WTC11 (cell line): ENCODE measurements at regions of chr12 and their contacts with region 1.

Region 1: DNA sequence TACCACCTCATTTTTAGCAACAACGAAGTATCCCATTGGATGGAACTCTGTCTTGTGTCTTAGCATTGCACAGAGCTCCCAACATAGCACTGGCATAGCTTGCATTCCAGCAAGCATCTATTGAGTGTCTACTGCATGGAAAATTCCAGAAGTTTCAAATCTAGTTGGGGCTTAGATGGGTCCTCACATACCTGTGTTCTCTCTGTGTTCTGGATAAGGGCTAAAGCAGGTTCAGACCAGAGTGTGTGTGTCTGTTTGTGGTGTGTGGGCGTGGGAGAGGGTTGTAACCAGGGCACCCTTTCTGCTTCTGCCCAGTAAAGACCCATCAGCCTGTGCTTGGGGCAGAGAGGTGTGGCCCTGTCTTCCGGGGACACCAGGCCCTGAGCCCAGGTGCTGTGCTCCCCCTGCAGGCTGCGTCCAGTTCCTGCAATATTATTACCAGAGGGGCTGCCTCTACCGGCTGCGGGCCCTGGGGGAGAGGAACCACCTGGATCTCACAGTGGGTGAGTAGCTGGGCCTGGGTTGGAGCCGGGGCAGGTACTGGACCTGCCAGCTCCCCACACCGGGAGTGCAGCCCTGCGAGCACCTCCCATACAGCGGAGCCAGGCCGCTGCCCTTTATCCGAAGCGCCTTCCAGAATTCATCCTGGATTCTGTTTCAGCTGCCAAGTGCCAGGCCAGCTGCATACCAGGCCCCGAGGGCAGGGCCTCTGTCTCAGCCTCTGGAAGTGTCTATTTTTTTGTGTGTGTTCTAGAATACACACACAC is 20.3 kb downstream of the RHOF start:
- DNase-seq: peak; percentile 88
- ATAC-seq: peak; percentile 77
- H3K4me3 Mint-ChIP-seq: no peak overlapping the region
- H3K27ac Mint-ChIP-seq: peak overlapping the region; percentile 72
- H3K4me1 Mint-ChIP-seq: peaks cover 16% of the 10 kb centered on the region
- H3K27me3 Mint-ChIP-seq: no peaks in the 10 kb centered on the region
- CTCF ChIP-seq: peak; percentile 77

Region 2: DNA sequence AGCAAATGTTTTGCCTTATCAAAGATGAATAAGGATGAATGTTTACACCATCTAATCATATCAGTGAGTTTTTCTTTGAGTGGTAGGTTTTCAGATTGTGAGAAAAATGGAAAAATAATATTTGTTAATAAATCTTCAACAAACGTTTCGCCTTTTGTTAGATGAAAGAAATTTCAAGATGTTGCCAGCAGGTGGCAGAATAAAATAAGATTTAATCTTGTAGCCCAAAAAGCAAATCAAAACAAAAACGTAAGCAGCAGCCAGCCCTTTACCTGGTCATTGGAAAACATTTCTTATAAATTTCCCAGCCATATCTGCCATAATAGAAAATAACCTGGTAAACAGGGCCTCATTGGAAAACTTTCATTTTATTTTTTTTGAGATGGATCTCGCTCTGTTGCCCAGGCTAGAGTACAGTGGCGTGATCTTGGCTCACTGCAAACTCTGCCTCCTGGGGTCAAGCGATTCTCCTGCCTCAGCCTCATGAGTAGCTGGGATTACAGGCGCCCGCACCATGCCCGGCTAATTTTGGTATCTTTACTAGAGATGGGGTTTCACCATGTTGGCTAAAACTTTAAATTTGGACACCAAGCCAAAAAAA is 76.0 kb before region 1 on chr12:
- CTCF ChIA-PET with region 1: interaction called, 19 read pairs
- POLR2A ChIA-PET with region 1: no interaction called
- DNase-seq: no peak
- ATAC-seq: no peak
- H3K4me3 Mint-ChIP-seq: no peak overlapping the region
- H3K27ac Mint-ChIP-seq: no peak overlapping the region
- H3K4me1 Mint-ChIP-seq: no peaks in the 10 kb centered on the region
- H3K27me3 Mint-ChIP-seq: no peaks in the 10 kb centered on the region
- CTCF ChIP-seq: peak; percentile 25; the same call in 1 of the 2 replicates

Region 3: GRCh38 chr12:121712461-121713256 is 60.5 kb before region 1 on chr12 and contains the start of gene TMEM120B:
- CTCF ChIA-PET with region 1: interaction called, 27 read pairs
- POLR2A ChIA-PET with region 1: no interaction called
- DNase-seq: peak; percentile 71
- ATAC-seq: peak; percentile 85
- H3K4me3 Mint-ChIP-seq: peak within 1 kb of the TSS; percentile 90
- H3K27ac Mint-ChIP-seq: peak within 1 kb of the TSS; percentile 96
- H3K4me1 Mint-ChIP-seq: peaks cover 36% of the 10 kb centered on the region
- H3K27me3 Mint-ChIP-seq: no peaks in the 10 kb centered on the region
- CTCF ChIP-seq: no peak
- total RNA-seq, gene TMEM120B: 30.7 to 36.9 TPM (median 33.6 TPM) in 3 replicates

Region 4: GRCh38 chr12:121817648-121818043 is 44.5 kb after region 1 on chr12:
- CTCF ChIA-PET with region 1: no interaction called
- POLR2A ChIA-PET with region 1: no interaction called
- DNase-seq: no peak
- ATAC-seq: no peak
- H3K4me3 Mint-ChIP-seq: no peak overlapping the region
- H3K27ac Mint-ChIP-seq: no peak overlapping the region
- H3K4me1 Mint-ChIP-seq: peaks cover 12% of the 10 kb centered on the region
- H3K27me3 Mint-ChIP-seq: no peaks in the 10 kb centered on the region
- CTCF ChIP-seq: no peak